Activated naive CD4-positive, alpha-beta T cell treated with anti-CD3 and anti-CD28 coated beads, Interleukin-2, amount 10 ng/mL, durations not matched to agents 7 days and 5 days (primary cell): ENCODE measurements at regions of chr10 and their contacts with region 1.

Region 1: GRCh38 chr10:24518981-24519597 is 204.6 kb downstream of the ARHGAP21 start:
- DNase-seq: peak; percentile 52
- H3K4me3 Mint-ChIP-seq: no peak overlapping the region
- H3K27ac Mint-ChIP-seq: no peak overlapping the region
- H3K4me1 Mint-ChIP-seq: peaks cover 11% of the 10 kb centered on the region
- H3K27me3 Mint-ChIP-seq: peaks cover 12% of the 10 kb centered on the region

Region 2: GRCh38 chr10:23994479-23995046 is 524.5 kb before region 1 on chr10:
- CTCF ChIA-PET with region 1: interaction called, 25 read pairs
- DNase-seq: peak; percentile 31
- H3K4me3 Mint-ChIP-seq: no peak overlapping the region
- H3K27ac Mint-ChIP-seq: no peak overlapping the region
- H3K4me1 Mint-ChIP-seq: no peaks in the 10 kb centered on the region
- H3K27me3 Mint-ChIP-seq: no peaks in the 10 kb centered on the region

Region 3: DNA sequence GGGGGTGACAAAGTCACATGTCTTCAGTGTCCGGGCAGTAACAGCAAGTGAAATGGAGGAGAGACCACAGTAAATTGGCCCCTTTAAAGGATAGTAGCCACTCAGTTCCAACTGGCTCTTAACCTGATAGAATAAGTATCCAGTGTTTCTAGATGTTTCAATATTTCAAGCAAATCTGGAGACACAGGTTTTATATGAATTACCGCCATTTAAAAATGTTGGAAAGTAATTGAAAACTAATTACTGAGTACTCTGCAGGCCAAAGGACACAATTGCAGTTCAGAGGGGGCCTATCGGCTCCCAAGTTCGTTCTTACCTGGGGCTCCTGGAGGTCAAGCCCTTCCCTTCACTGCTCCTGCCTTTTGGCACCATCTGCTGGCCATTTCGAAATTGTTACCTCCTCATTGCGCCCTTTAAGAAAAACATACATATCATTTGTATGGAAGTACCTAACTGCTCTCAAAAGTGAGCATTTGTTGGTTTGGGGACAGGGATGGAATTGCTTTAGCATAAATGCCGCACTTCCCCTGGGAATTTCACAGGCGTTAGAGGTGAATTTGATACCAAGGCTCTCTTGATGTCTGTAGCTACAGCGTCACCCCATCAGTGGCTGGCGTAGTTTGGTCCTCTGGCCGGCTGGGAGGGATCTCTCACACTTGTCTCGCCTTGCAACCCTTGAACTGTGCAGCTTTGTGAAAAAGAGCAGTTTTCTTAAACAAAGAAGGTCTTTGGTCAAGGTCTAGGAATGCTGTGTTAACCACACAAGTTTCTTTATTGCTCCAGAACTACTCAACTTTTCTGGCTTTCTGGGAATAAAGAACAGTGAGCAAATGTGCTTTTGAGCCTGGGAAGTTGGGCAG is 15.4 kb before region 1 on chr10:
- CTCF ChIA-PET with region 1: interaction called, 35 read pairs
- DNase-seq: peak; percentile 40
- H3K4me3 Mint-ChIP-seq: no peak overlapping the region
- H3K27ac Mint-ChIP-seq: no peak overlapping the region
- H3K4me1 Mint-ChIP-seq: no peaks in the 10 kb centered on the region
- H3K27me3 Mint-ChIP-seq: no peaks in the 10 kb centered on the region

Region 4: GRCh38 chr10:24603333-24603732 is 84.2 kb after region 1 on chr10:
- CTCF ChIA-PET with region 1: no interaction called
- DNase-seq: no peak
- H3K4me3 Mint-ChIP-seq: no peak overlapping the region
- H3K27ac Mint-ChIP-seq: peak overlapping the region; percentile 12
- H3K4me1 Mint-ChIP-seq: peaks cover 12% of the 10 kb centered on the region
- H3K27me3 Mint-ChIP-seq: no peaks in the 10 kb centered on the region

Region 5: DNA sequence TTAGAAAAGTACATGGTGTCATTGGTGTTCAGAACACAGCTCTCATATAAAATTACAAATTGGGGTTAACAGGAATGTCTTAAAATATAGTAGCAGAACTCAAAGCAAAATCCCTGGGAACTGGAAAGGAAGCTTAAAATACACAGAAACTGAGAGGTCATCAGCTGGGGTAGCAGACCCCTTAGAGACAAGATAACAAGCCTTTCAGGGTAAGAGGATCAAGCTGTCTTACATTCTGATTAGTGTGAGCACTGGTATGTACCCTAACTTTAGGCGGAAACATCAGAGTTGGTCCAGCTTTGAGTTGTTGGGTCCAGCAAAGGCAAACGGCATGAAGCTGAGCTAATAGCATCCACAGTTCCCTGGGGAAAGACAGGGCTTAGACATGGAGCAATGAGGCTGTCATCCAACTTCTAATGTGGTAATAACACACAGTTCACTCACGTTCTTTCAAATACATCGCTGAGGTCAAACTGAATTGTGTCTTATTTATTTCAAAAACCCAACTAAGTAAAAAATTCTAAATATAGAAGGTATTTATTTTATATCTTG is 171.9 kb after region 1 on chr10:
- CTCF ChIA-PET with region 1: no interaction called
- DNase-seq: no peak
- H3K4me3 Mint-ChIP-seq: no peak overlapping the region
- H3K27ac Mint-ChIP-seq: no peak overlapping the region
- H3K4me1 Mint-ChIP-seq: peaks cover 2% of the 10 kb centered on the region
- H3K27me3 Mint-ChIP-seq: no peaks in the 10 kb centered on the region